ENCODE measurements at regions of chr22 and their contacts with region 1.

Region 1: DNA sequence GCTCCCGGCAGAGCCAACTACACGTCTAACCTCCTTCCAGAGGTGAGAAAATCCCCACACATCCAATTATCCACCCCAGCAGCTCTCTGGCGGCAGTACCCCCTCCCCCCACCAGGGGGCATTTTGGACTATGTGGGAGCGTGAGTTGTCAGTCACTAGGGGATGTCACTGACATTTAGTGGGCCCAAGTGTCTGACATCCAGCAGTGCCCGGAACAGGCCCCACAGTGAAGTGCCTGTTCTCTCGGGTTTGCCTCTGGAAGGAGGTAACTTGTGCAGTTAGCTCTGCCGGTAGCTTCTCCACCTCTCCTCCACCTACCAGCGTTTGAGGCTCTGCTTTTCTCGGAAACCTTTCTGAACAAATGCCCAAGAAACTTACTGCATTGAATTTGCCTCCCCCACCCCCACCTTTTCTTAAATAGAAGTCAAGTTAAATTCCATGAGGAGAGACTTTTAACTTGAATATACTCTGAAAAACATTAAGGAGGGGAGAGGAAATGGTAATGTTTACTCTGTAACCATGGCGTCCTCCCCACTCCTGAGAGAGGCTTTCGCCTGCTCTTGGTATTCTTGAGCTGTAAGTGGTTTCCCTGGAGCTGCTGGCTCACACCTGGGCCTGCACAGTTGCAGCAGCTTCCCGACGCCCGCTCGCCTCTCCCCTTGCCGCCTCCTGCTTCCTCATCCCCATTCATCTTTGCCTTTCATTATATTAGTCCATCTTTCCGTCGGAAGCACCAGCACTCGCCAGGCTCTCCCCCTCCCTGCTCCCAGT is 112.8 kb downstream of the WNT7B start:
- DNase-seq: peak; percentile 44 to 74 (median 60)
- ATAC-seq: peak; percentile 81
- H3K4me3 ChIP-seq: no peak overlapping the region
- H3K4me3 Mint-ChIP-seq: no peak overlapping the region
- H3K27ac ChIP-seq: no peak overlapping the region
- H3K27ac Mint-ChIP-seq: no peak overlapping the region
- H3K4me1 ChIP-seq: peaks cover 8% of the 10 kb centered on the region
- H3K4me1 Mint-ChIP-seq: peaks cover 13% of the 10 kb centered on the region
- H3K27me3 ChIP-seq: peaks cover 15 to 41% of the 10 kb centered on the region in 2 experiments
- H3K27me3 Mint-ChIP-seq: peaks cover 35% of the 10 kb centered on the region
- CTCF ChIP-seq: peak; percentile 83

Region 2: DNA sequence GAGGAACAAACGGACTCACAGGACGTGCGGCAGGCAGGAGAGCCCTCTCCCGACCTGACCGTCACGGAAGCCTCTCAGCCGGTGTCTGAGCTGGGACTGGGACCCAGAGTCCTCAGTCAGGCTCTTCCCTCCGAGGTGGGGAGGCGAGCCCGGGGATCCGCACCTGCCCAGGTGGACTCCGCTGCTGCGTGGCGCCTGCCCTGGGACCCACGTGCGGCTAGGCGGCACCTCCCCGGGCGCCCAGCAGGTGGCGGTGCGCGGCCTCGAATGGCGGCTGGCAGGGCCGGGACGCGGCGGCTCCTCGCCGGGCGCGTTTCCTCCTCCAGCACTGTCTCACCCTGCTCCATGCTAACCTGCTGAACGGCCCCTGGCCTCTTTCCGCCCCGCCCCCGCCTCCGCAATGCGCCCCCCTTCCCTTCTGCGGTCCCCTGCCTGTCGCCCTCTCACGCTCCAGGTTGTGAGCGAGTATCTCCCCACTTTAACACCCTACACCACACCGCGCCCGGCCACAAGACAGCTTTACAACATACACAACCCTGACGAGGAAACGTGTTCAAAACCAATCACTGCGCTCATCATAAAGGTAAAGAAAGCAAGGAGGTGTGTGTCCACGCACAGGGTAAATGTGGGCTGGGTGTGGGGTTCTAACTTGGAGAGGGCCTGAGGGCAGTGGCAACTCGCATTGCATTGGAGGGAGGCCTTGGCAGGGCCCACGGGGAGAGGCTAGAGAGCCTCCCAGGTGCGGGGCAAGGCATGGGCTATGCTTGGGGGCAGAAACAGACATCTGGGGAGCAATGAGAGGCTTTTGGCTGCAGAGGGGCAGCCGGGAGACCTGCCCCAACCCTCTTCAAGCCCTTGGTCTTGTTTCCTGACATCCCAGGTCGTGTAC is 218.4 kb before region 1 on chr22:
- CTCF ChIA-PET with region 1: no interaction called
- POLR2A ChIA-PET with region 1: no interaction called
- intact Hi-C with region 1: loop called in 1 of 2 experiments (anchors 10 kb)
- DNase-seq: peak; percentile 51 to 86 (median 75)
- ATAC-seq: peak; percentile 97
- H3K4me3 ChIP-seq: no peak overlapping the region
- H3K4me3 Mint-ChIP-seq: no peak overlapping the region
- H3K27ac ChIP-seq: no peak overlapping the region
- H3K27ac Mint-ChIP-seq: no peak overlapping the region
- H3K4me1 ChIP-seq: peaks cover 12% of the 10 kb centered on the region
- H3K4me1 Mint-ChIP-seq: no peaks in the 10 kb centered on the region
- H3K27me3 ChIP-seq: peaks cover 12 to 20% of the 10 kb centered on the region in 2 experiments
- H3K27me3 Mint-ChIP-seq: peaks cover 66% of the 10 kb centered on the region
- CTCF ChIP-seq: peak; percentile 84

Region 3: GRCh38 chr22:45903355-45904149 is 39.4 kb after region 1 on chr22:
- CTCF ChIA-PET with region 1: no interaction called
- POLR2A ChIA-PET with region 1: no interaction called
- intact Hi-C with region 1: no loop called
- DNase-seq: no peak
- ATAC-seq: no peak
- H3K4me3 ChIP-seq: no peak overlapping the region
- H3K4me3 Mint-ChIP-seq: no peak overlapping the region
- H3K27ac ChIP-seq: no peak overlapping the region
- H3K27ac Mint-ChIP-seq: no peak overlapping the region
- H3K4me1 ChIP-seq: no peaks in the 10 kb centered on the region
- H3K4me1 Mint-ChIP-seq: no peaks in the 10 kb centered on the region
- H3K27me3 ChIP-seq: no peaks in the 10 kb centered on the region
- H3K27me3 Mint-ChIP-seq: peaks cover 30% of the 10 kb centered on the region
- CTCF ChIP-seq: no peak

Region 4: GRCh38 chr22:46044621-46045438 is 180.7 kb after region 1 on chr22:
- CTCF ChIA-PET with region 1: no interaction called
- POLR2A ChIA-PET with region 1: no interaction called
- intact Hi-C with region 1: no loop called
- DNase-seq: peak in 10 of 14 experiments; percentile 21 to 60 (median 42)
- ATAC-seq: peak; percentile 59
- H3K4me3 ChIP-seq: peak overlapping the region; percentile 52
- H3K4me3 Mint-ChIP-seq: peak overlapping the region; percentile 92
- H3K27ac ChIP-seq: peak overlapping the region; percentile 48 to 55
- H3K27ac Mint-ChIP-seq: peak overlapping the region; percentile 90
- H3K4me1 ChIP-seq: peaks cover 41% of the 10 kb centered on the region
- H3K4me1 Mint-ChIP-seq: peaks cover 34% of the 10 kb centered on the region
- H3K27me3 ChIP-seq: no peaks in the 10 kb centered on the region
- H3K27me3 Mint-ChIP-seq: no peaks in the 10 kb centered on the region
- CTCF ChIP-seq: no peak

Region 5: DNA sequence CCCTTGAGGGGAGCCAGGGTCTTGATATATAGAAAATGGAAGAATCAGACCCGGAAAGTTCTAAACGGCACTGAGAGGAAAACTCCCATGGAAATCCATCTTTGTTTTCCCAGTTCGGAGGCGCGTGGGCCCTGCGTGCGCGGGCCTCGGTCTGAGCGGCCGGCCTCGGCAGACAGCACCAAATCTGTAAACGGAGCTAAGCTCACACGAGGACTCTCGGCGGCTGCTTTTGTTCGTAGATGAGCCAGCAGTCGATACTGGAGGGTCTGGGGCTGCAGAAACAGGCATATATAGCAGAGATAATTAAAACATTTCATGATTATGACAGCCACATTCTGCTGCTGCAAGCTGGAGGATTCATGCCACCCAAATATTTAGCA is 217.7 kb after region 1 on chr22:
- CTCF ChIA-PET with region 1: no interaction called
- POLR2A ChIA-PET with region 1: no interaction called
- intact Hi-C with region 1: no loop called
- DNase-seq: no peak
- ATAC-seq: no peak
- H3K4me3 ChIP-seq: no peak overlapping the region
- H3K4me3 Mint-ChIP-seq: no peak overlapping the region
- H3K27ac ChIP-seq: no peak overlapping the region
- H3K27ac Mint-ChIP-seq: no peak overlapping the region
- H3K4me1 ChIP-seq: peaks cover 4% of the 10 kb centered on the region
- H3K4me1 Mint-ChIP-seq: peaks cover 14% of the 10 kb centered on the region
- H3K27me3 ChIP-seq: no peaks in the 10 kb centered on the region
- H3K27me3 Mint-ChIP-seq: no peaks in the 10 kb centered on the region
- CTCF ChIP-seq: no peak

Measured in CD4-positive, alpha-beta T cell (primary cell).